BJ (cell line): ENCODE measurements at regions of chr4 and their contacts with region 1.

Region 1: GRCh38 chr4:142379277-142380057 is 466.6 kb downstream of the INPP4B start:
- DNase-seq: peak; percentile 99
- H3K4me3 ChIP-seq: no peak overlapping the region
- H3K27me3 ChIP-seq: no peaks in the 10 kb centered on the region
- CTCF ChIP-seq: no peak

Region 2: DNA sequence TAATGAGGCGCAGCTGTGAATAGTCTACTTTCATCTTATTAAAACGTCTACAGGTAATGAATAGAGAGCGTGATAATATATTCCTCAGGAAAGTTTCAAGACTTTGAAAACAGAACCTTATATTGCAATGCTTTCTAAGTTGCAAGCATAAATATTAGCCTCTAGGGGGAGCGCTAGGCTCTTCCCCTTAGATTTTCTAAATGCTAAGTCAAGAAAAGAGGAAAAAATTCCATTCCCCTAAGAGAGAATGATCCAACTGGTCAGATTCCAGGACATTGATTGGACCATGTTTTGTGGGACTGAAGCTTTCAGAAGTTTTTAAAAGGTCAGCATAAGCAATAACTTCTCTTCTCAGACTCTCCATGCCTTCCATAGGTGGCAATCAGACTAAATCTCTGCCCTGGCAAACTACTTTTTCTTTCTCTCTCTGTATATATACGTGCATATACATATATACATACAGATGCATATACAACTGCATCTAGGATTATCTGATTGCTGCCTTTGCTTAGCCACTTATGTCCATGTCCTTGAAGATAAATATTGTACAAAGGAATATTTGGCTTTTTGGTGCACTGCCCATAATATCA is 26.2 kb before region 1 on chr4:
- CTCF ChIA-PET with region 1: interaction called, 15 read pairs
- POLR2A ChIA-PET with region 1: no interaction called
- DNase-seq: no peak
- H3K4me3 ChIP-seq: no peak overlapping the region
- H3K27me3 ChIP-seq: no peaks in the 10 kb centered on the region
- CTCF ChIP-seq: peak; percentile 82

Region 3: DNA sequence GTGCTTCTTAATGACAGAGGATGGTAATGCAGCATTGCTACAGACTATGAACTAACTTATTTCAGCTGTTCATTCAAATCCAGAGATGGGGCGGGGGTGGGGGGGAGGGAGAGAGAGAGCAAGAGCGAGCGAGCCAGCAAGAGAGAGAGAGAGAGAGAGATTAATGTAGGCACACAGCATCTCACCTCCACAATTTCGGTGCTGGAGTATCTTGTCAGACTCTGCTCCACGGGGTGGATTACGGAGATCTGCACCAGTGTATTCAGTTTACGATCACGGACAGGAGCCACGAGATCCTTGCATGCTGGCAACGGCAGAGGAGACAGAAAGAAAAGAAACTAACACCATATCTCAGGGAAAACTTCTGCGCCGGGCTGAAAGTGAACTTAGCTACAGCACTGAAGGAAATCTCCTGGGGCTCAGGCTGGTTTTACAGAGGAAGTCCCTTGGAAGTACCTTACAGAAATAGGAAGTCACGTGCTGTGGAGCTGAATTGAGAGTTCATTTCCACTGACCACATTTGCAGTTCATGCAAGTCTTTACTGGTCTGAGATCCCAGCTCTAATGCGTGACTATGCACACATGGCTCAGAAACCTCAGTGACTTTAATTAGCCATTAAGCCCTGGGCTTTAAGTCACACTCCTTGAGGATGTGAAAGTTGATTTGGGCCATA is 25.7 kb after region 1 on chr4:
- CTCF ChIA-PET with region 1: interaction called, 4 read pairs
- POLR2A ChIA-PET with region 1: interaction called, 10 read pairs
- DNase-seq: peak; percentile 77
- H3K4me3 ChIP-seq: peak overlapping the region; percentile 42
- H3K27me3 ChIP-seq: no peaks in the 10 kb centered on the region
- CTCF ChIP-seq: no peak

Region 4: GRCh38 chr4:142567199-142567598 is 187.7 kb after region 1 on chr4:
- CTCF ChIA-PET with region 1: no interaction called
- POLR2A ChIA-PET with region 1: no interaction called
- DNase-seq: no peak
- H3K4me3 ChIP-seq: no peak overlapping the region
- H3K27me3 ChIP-seq: no peaks in the 10 kb centered on the region
- CTCF ChIP-seq: no peak